ENCODE measurements at regions of chr1 and their contacts with region 1.

Region 1: GRCh38 chr1:241600496-241600901 is 39.7 kb downstream of the CHML start:
- DNase-seq: no peak
- ATAC-seq: no peak
- H3K4me3 ChIP-seq: no peak overlapping the region
- H3K27ac ChIP-seq: no peak overlapping the region
- H3K4me1 ChIP-seq: peaks cover 0 to 15% (median 0%) of the 10 kb centered on the region in 9 donors
- H3K27me3 ChIP-seq: no peaks in the 10 kb centered on the region
- CTCF ChIP-seq: no peak

Region 2: DNA sequence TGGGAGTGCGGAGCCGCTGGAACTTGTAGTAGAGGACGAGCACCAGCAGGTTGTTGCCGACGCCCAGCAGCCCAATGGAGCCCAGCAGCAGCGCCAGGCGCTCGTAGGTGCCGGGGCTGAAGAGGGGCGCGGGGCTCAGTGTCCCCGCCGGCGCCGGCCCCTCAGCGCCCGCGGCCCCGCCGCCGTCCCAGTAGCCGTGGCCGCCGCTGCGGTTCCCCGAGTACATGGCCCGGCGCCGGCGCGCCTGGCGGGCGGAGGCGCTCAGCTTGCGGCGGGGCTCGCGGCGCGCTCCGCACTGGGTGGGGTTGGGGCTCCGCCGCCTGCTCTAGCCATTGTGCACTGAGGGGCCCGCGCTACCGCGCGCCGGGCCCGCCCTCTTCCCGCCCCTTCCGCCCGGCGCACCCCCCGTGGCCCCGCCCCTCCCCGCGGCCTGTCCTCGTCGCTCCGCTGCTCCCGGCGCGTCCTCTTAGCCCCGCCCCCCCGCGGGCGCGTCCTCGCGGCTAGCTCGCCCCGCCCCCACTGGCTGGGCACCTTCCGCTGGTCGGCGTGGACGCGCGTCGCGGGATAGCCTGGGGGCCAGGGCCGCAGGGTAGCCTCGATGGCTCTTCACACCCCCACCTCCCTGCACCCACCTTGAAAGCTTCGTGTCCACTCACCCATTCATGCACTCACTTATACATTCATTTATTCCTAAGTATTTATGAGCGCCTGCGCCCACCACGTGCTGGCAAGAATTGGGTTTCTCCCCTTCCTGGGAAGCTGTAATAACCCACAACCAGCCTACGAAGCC is 39.7 kb after region 1 on chr1 and contains the starts of genes CHML and OPN3:
- intact Hi-C with region 1: no loop called
- DNase-seq: peak; percentile 93 to 97
- ATAC-seq: peak; percentile 98 to 100 (median 100)
- H3K4me3 ChIP-seq: peak within 1 kb of the TSS; percentile 71 to 100 (median 91)
- H3K27ac ChIP-seq: peak within 1 kb of the TSS in 9 of 10 donors; percentile 77 to 91 (median 83)
- H3K4me1 ChIP-seq: peaks cover 0 to 40% (median 12%) of the 10 kb centered on the region in 9 donors
- H3K27me3 ChIP-seq: no peaks in the 10 kb centered on the region
- CTCF ChIP-seq: peak in 1 of 9 donors; percentile 1
- total RNA-seq, gene CHML: 4.8 to 11.4 (median 8.0) TPM
- total RNA-seq, gene OPN3: 3.3 to 9.1 (median 4.9) TPM

Region 3: GRCh38 chr1:241666419-241666818 is 65.9 kb after region 1 on chr1:
- intact Hi-C with region 1: loop called in 1 of 10 experiments (anchors 10 kb)
- DNase-seq: no peak
- ATAC-seq: no peak
- H3K4me3 ChIP-seq: no peak overlapping the region
- H3K27ac ChIP-seq: no peak overlapping the region
- H3K4me1 ChIP-seq: no peaks in the 10 kb centered on the region
- H3K27me3 ChIP-seq: peaks cover 0 to under 1% (median 0%) of the 10 kb centered on the region in 7 donors
- CTCF ChIP-seq: no peak

Region 4: DNA sequence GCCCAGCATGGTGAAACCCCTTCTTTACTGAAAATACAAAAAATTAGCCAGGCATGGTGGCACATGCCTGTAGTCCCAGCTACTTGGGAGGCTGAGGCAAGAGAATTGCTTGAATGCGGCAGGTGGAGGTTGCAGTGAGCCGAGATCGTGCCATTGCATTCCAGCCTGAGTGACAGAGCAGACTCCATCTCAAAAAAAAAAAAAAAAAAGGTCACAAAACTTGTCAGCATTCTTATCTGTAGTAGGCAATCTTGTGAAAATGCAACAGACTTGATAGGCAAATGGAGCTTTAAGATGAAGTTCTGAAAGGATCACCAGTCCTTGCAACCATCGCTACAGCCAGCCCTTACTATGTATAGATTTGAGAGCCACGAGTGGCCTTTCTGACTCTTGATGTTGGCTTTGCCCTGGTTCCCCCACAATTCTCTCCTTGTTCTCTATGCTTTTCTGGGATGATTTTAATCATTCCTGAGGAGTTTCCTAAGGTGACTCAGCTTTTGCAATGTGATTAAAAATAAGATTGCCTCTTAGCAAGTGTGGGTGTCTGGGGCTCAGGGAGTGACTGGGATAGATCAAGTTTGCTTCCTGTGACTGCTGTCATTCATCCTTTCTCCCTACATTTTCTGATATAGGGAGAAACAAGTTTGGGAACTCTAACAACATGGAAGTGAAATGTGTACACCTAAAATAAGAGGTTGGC is 405.5 kb after region 1 on chr1:
- intact Hi-C with region 1: loop called in 1 of 10 experiments (anchors 10 kb)
- DNase-seq: no peak
- ATAC-seq: no peak
- H3K4me3 ChIP-seq: no peak overlapping the region
- H3K27ac ChIP-seq: no peak overlapping the region
- H3K4me1 ChIP-seq: no peaks in the 10 kb centered on the region
- H3K27me3 ChIP-seq: peaks cover 0 to 4% (median 0%) of the 10 kb centered on the region in 7 donors
- CTCF ChIP-seq: no peak